Aorta (tissue), 5 donors: ENCODE measurements at regions of chr19 and their contacts with region 1.

Region 1: GRCh38 chr19:5719961-5720790 is at the starts of genes CATSPERD and LONP1:
- DNase-seq: peak; percentile 99
- ATAC-seq: peak; percentile 99
- H3K4me3 ChIP-seq: peak within 1 kb of the TSS; percentile 67 to 97
- H3K27ac ChIP-seq: peak within 1 kb of the TSS; percentile 62 to 77
- H3K4me1 ChIP-seq: peaks cover 0 to 6% of the 10 kb centered on the region in 2 donors
- H3K27me3 ChIP-seq: no peaks in the 10 kb centered on the region
- total RNA-seq, gene CATSPERD: not detected
- total RNA-seq, gene LONP1: 40.3 to 46.4 TPM

Region 2: GRCh38 chr19:5690125-5690954 is 29.8 kb before region 1 on chr19 and contains the start of gene RPL36:
- intact Hi-C with region 1: loop called in 1 of 2 experiments (anchors 1 kb)
- DNase-seq: peak; percentile 98 to 100
- ATAC-seq: peak; percentile 93
- H3K4me3 ChIP-seq: peak within 1 kb of the TSS; percentile 41 to 55
- H3K27ac ChIP-seq: peak within 1 kb of the TSS in 1 of 2 donors; percentile 41
- H3K4me1 ChIP-seq: no peaks in the 10 kb centered on the region
- H3K27me3 ChIP-seq: no peaks in the 10 kb centered on the region
- total RNA-seq, gene RPL36: 521 to 587 TPM

Region 3: DNA sequence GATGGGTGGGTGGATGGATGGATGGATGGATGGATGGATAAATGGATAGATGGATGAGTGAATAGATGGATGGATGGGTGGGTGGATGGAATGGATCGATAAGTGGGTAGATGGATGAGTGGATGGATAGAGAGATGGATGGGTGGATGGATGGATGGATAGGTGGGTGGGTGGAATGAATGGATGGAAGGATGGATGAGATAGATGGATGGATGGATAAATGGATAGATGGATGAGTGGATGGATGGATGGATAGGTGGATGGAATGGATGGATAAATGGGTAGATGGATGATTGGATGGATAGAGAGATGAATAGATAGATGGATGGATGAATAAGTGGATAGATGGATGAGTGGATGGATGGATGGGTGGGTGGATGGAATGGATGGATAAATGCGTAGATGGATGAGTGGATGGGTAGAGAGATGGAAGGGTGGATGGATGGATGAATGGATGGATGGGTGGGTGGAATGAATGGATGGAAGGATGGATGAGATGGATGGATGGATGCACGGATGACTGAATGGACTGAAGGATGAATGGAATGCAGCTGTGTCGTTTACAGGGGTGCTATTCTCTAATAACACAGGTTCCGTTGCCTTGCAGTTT is 42.5 kb after region 1 on chr19:
- intact Hi-C with region 1: no loop called
- DNase-seq: no peak
- ATAC-seq: no peak
- H3K4me3 ChIP-seq: no peak overlapping the region
- H3K27ac ChIP-seq: no peak overlapping the region
- H3K4me1 ChIP-seq: no peaks in the 10 kb centered on the region
- H3K27me3 ChIP-seq: no peaks in the 10 kb centered on the region

Region 4: GRCh38 chr19:5790573-5791520 is 70.7 kb after region 1 on chr19 and contains the start of gene DUS3L:
- intact Hi-C with region 1: no loop called
- DNase-seq: peak; percentile 98
- ATAC-seq: peak; percentile 97
- H3K4me3 ChIP-seq: peak within 1 kb of the TSS; percentile 34 to 65
- H3K27ac ChIP-seq: peak within 1 kb of the TSS in 1 of 2 donors; percentile 82
- H3K4me1 ChIP-seq: no peaks in the 10 kb centered on the region
- H3K27me3 ChIP-seq: peaks cover 0 to 1% of the 10 kb centered on the region in 2 donors
- total RNA-seq, gene DUS3L: 25.6 to 27.6 TPM

Region 5: DNA sequence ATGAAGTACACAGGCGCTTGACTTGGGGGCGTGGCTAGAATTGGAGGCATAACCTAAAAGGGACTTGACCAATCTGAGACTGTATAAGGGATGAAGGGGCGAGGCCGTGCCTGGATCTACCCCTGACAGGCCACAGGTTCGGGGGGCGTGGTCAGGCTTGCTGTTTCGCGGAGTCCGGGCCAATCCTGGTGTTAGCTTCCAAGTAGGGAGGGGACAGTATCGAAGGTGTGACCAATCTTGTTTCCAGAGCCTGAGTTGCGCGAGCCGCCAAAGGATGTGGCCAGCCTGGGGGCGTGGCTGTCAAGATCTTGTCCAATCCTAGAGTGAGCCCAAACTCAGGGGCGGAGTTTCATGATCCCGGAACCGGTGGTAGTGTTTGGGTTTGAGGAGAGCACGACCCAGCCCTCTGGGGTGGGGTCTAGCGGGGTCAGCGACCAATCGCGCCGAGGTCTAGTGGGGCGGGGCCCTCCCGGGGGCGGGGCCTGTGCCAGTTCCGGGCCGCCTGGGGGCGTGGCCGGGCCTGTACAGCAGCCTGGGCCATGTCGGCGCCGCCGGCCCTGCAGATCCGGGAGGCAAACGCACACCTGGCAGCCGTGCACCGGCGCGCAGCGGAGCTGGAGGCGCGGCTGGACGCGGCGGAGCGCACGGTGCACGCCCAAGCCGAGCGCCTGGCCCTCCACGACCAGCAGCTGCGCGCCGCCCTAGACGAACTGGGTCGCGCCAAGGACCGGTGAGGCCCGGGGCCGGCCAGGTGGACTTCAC is 184.4 kb after region 1 on chr19 and contains the start of gene VMAC:
- intact Hi-C with region 1: loop called in 1 of 2 experiments (anchors 1 kb)
- DNase-seq: peak; percentile 100
- ATAC-seq: peak; percentile 93
- H3K4me3 ChIP-seq: peak within 1 kb of the TSS; percentile 55 to 63
- H3K27ac ChIP-seq: peak within 1 kb of the TSS in 1 of 2 donors; percentile 58
- H3K4me1 ChIP-seq: no peaks in the 10 kb centered on the region
- H3K27me3 ChIP-seq: no peaks in the 10 kb centered on the region
- total RNA-seq, gene VMAC: 3.9 to 9.2 TPM